ENCODE measurements at regions of chr5 and their contacts with region 1.

Region 1: GRCh38 chr5:29005386-29005785 is 1967.0 kb upstream of the CDH9 start:
- DNase-seq: peak in 1 of 2 experiments; percentile 35
- H3K4me3 ChIP-seq: no peak overlapping the region
- H3K4me3 Mint-ChIP-seq: no peak overlapping the region
- H3K27ac Mint-ChIP-seq: no peak overlapping the region
- H3K4me1 ChIP-seq: no peaks in the 10 kb centered on the region
- H3K4me1 Mint-ChIP-seq: no peaks in the 10 kb centered on the region
- H3K27me3 ChIP-seq: no peaks in the 10 kb centered on the region
- H3K27me3 Mint-ChIP-seq: no peaks in the 10 kb centered on the region
- CTCF ChIP-seq: peak; percentile 19 to 53

Region 2: DNA sequence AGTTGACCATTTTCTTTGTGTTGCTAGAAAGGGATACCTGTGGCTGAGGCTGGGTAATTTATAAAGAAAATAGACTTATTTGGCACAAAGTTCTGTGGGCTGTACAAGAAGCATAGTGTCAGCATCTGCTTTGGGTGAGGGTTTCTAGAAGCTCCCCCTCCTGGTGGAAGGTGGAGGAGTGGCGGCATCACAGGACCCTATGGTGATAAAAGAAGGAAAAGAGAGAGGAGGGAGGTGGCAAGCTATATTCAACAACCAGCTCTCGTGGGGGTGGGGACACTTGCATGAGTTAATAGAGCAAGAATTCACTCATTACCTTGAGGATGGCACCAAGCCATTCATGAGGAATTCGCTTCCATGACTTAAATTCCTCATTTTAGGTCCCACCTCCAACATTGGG is 74.4 kb after region 1 on chr5:
- CTCF ChIA-PET with region 1: no interaction called
- POLR2A ChIA-PET with region 1: no interaction called
- intact Hi-C with region 1: loop called (anchors 5 kb)
- DNase-seq: peak; percentile 33 to 36
- H3K4me3 ChIP-seq: no peak overlapping the region
- H3K4me3 Mint-ChIP-seq: no peak overlapping the region
- H3K27ac Mint-ChIP-seq: no peak overlapping the region
- H3K4me1 ChIP-seq: no peaks in the 10 kb centered on the region
- H3K4me1 Mint-ChIP-seq: peaks cover 12% of the 10 kb centered on the region
- H3K27me3 ChIP-seq: no peaks in the 10 kb centered on the region
- H3K27me3 Mint-ChIP-seq: no peaks in the 10 kb centered on the region
- CTCF ChIP-seq: peak; percentile 34 to 49

Region 3: GRCh38 chr5:29143266-29143665 is 137.9 kb after region 1 on chr5:
- CTCF ChIA-PET with region 1: no interaction called
- POLR2A ChIA-PET with region 1: no interaction called
- intact Hi-C with region 1: loop called (anchors 1 kb)
- DNase-seq: no peak
- H3K4me3 ChIP-seq: no peak overlapping the region
- H3K4me3 Mint-ChIP-seq: no peak overlapping the region
- H3K27ac Mint-ChIP-seq: no peak overlapping the region
- H3K4me1 ChIP-seq: no peaks in the 10 kb centered on the region
- H3K4me1 Mint-ChIP-seq: no peaks in the 10 kb centered on the region
- H3K27me3 ChIP-seq: no peaks in the 10 kb centered on the region
- H3K27me3 Mint-ChIP-seq: no peaks in the 10 kb centered on the region
- CTCF ChIP-seq: no peak

Region 4: GRCh38 chr5:29162297-29162696 is 156.9 kb after region 1 on chr5:
- CTCF ChIA-PET with region 1: no interaction called
- POLR2A ChIA-PET with region 1: no interaction called
- intact Hi-C with region 1: no loop called
- DNase-seq: no peak
- H3K4me3 ChIP-seq: no peak overlapping the region
- H3K4me3 Mint-ChIP-seq: no peak overlapping the region
- H3K27ac Mint-ChIP-seq: no peak overlapping the region
- H3K4me1 ChIP-seq: no peaks in the 10 kb centered on the region
- H3K4me1 Mint-ChIP-seq: no peaks in the 10 kb centered on the region
- H3K27me3 ChIP-seq: no peaks in the 10 kb centered on the region
- H3K27me3 Mint-ChIP-seq: no peaks in the 10 kb centered on the region
- CTCF ChIP-seq: no peak

Region 5: GRCh38 chr5:29218134-29218533 is 212.7 kb after region 1 on chr5:
- CTCF ChIA-PET with region 1: interaction called, 5 read pairs
- POLR2A ChIA-PET with region 1: no interaction called
- intact Hi-C with region 1: loop called (anchors 1 kb)
- DNase-seq: peak in 1 of 2 experiments; percentile 5
- H3K4me3 ChIP-seq: no peak overlapping the region
- H3K4me3 Mint-ChIP-seq: no peak overlapping the region
- H3K27ac Mint-ChIP-seq: no peak overlapping the region
- H3K4me1 ChIP-seq: 0 out of 2 replicates have a peak, but pooled peaks cover 4% of the 10 kb centered on the region
- H3K4me1 Mint-ChIP-seq: peaks cover 4% of the 10 kb centered on the region
- H3K27me3 ChIP-seq: no peaks in the 10 kb centered on the region
- H3K27me3 Mint-ChIP-seq: no peaks in the 10 kb centered on the region
- CTCF ChIP-seq: peak in 1 of 2 experiments; percentile 29

Region 6: GRCh38 chr5:29252390-29252789 is 247.0 kb after region 1 on chr5:
- CTCF ChIA-PET with region 1: no interaction called
- POLR2A ChIA-PET with region 1: no interaction called
- intact Hi-C with region 1: loop called (anchors 1 kb)
- DNase-seq: peak in 1 of 2 experiments; percentile 3
- H3K4me3 ChIP-seq: no peak overlapping the region
- H3K4me3 Mint-ChIP-seq: no peak overlapping the region
- H3K27ac Mint-ChIP-seq: no peak overlapping the region
- H3K4me1 ChIP-seq: no peaks in the 10 kb centered on the region
- H3K4me1 Mint-ChIP-seq: no peaks in the 10 kb centered on the region
- H3K27me3 ChIP-seq: no peaks in the 10 kb centered on the region
- H3K27me3 Mint-ChIP-seq: no peaks in the 10 kb centered on the region
- CTCF ChIP-seq: no peak